ENCODE measurements at regions of chr1 and their contacts with region 1.

Region 1: DNA sequence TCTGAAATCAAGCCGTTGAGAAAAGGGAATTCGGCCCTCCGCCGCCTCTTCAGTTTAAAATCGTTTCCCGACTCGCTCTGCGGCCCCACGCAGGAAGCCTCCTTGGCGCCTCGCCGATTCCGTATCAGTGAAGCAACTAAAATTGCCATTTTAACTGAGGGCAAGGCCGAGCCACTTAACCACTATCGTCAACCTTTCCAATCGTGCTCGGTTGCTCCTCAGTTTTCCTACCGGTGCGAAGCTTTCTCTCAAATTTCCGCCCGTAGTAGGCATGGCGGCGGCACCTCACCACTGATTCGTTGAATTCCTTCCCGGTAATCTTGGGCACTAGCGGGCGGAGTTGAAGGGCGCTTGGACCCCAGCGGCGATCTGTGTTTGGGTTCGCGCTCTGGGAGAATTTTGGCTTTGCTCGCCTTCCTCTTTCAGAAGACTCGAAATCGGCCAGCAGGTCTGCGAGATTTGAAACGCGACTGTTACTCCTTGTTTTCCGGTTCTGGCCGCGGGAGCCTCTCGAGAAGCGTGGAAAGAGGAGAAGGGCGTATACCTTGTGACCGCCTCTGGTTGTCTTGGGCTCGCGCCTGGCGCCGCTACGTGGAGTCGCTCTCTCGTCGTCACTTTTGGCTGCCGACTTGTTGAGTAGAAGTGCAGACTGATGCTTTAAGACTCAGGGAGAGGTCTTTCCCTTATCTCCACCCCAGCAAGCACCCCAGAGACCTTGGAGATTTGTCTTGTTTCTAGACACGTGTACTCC is at the starts of genes CENPL and DARS2:
- DNase-seq: peak; percentile 91
- ATAC-seq: peak; percentile 94
- H3K4me3 ChIP-seq: peak within 1 kb of the TSS; percentile 99
- H3K27ac ChIP-seq: peak within 1 kb of the TSS; percentile 99
- H3K4me1 ChIP-seq: peaks cover 20% of the 10 kb centered on the region
- H3K27me3 ChIP-seq: no peaks in the 10 kb centered on the region
- CTCF ChIP-seq: no peak
- total RNA-seq, gene CENPL: 28.7 TPM
- total RNA-seq, gene DARS2: 28.8 TPM

Region 2: DNA sequence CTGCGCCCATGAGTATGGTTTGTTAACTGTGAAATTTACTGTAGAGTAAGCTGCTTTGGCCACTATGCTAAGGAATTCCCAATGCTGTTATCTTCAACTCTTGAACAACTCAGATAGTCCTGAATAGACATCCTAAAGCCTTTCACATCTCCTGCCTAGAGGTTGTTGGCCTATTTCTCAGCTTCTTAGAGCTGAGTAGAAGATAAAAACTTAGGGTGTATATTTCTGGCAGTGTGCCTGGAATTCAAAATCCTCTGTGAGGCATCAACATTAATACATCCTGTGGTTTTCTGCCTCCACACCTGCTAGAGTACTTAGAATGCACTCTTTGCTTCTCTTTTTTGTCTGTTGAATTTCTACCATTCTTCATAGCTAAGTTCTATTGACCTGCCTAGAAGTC is 243.5 kb after region 1 on chr1:
- CTCF ChIA-PET with region 1: no interaction called
- POLR2A ChIA-PET with region 1: no interaction called
- in situ Hi-C with region 1: no loop called
- intact Hi-C with region 1: no loop called
- DNase-seq: no peak
- ATAC-seq: no peak
- H3K4me3 ChIP-seq: no peak overlapping the region
- H3K27ac ChIP-seq: no peak overlapping the region
- H3K4me1 ChIP-seq: no peaks in the 10 kb centered on the region
- H3K27me3 ChIP-seq: no peaks in the 10 kb centered on the region
- CTCF ChIP-seq: no peak

Region 3: GRCh38 chr1:174167265-174167803 is 342.8 kb after region 1 on chr1:
- CTCF ChIA-PET with region 1: interaction called, 10 read pairs
- POLR2A ChIA-PET with region 1: no interaction called
- in situ Hi-C with region 1: no loop called
- intact Hi-C with region 1: no loop called
- DNase-seq: no peak
- ATAC-seq: no peak
- H3K4me3 ChIP-seq: no peak overlapping the region
- H3K27ac ChIP-seq: no peak overlapping the region
- H3K4me1 ChIP-seq: peaks cover 12% of the 10 kb centered on the region; the same call in 1 of the 2 replicates
- H3K27me3 ChIP-seq: no peaks in the 10 kb centered on the region
- CTCF ChIP-seq: no peak

Measured in Panc1 (cell line).